ENCODE measurements at regions of chr17 and their contacts with region 1.

Region 1: GRCh38 chr17:41738077-41738735 is 3.8 kb upstream of the HAP1 start:
- DNase-seq: peak; percentile 69 to 95
- H3K4me3 ChIP-seq: no peak overlapping the region
- H3K27ac ChIP-seq: peak overlapping the region; percentile 79
- H3K4me1 ChIP-seq: peaks cover 0 to 11% (median 8%) of the 10 kb centered on the region in 4 experiments; a peak in 6 of 7 replicates
- H3K27me3 ChIP-seq: peaks cover 13 to 45% (median 33%) of the 10 kb centered on the region in 4 experiments
- CTCF ChIP-seq: peak; percentile 97 to 99 (median 98)
- EP300 ChIP-seq: 0 out of 3 replicates have a peak, but pooled peaks of 1 of the 2 experiments have one; percentile 34
- POLR2A ChIP-seq: 0 out of 3 replicates have a peak, but pooled peaks of 1 of the 2 experiments have one; percentile 19
- RAD21 ChIP-seq: peak; percentile 99 to 100

Region 2: GRCh38 chr17:41717408-41718286 is 20.6 kb before region 1 on chr17:
- CTCF ChIA-PET with region 1: interaction called, 7 read pairs
- POLR2A ChIA-PET with region 1: interaction called, 29 read pairs
- DNase-seq: no peak
- H3K4me3 ChIP-seq: no peak overlapping the region
- H3K27ac ChIP-seq: no peak overlapping the region
- H3K4me1 ChIP-seq: peaks cover 0 to 2% (median 0%) of the 10 kb centered on the region in 4 experiments; a peak in 2 of 7 replicates
- H3K27me3 ChIP-seq: peaks cover 0 to 8% (median 3%) of the 10 kb centered on the region in 4 experiments; a peak in 5 of 7 replicates
- CTCF ChIP-seq: no peak
- EP300 ChIP-seq: no peak
- POLR2A ChIP-seq: no peak
- RAD21 ChIP-seq: no peak

Region 3: GRCh38 chr17:41724476-41725050 is 13.6 kb before region 1 on chr17:
- CTCF ChIA-PET with region 1: interaction called, 10 read pairs
- POLR2A ChIA-PET with region 1: interaction called, 29 read pairs
- DNase-seq: no peak
- H3K4me3 ChIP-seq: no peak overlapping the region
- H3K27ac ChIP-seq: no peak overlapping the region
- H3K4me1 ChIP-seq: peaks cover 0 to 2% (median 0%) of the 10 kb centered on the region in 4 experiments; a peak in 3 of 7 replicates
- H3K27me3 ChIP-seq: no peaks in the 10 kb centered on the region
- CTCF ChIP-seq: no peak
- EP300 ChIP-seq: no peak
- POLR2A ChIP-seq: no peak
- RAD21 ChIP-seq: no peak

Region 4: DNA sequence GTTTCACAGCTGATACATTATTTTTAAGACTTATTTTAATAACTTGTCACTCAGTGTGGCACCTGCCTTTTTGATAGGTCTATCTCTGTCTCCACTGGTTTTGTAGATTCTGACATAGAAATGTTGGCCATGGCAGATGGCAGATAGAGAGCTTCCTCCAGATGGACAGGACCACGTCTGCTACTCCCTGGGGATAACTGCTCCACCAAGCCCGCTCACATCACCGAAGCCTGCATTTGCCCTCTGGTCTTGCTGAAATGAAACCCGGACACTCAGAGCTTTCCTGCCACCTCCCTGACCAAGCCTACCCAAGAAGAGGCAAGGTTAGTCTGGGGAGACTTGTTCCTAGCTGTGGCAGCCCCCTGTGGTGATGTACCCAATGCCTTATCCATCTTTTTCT is 12.7 kb after region 1 on chr17:
- CTCF ChIA-PET with region 1: interaction called, 4 read pairs
- POLR2A ChIA-PET with region 1: interaction called, 18 read pairs
- DNase-seq: no peak
- H3K4me3 ChIP-seq: no peak overlapping the region
- H3K27ac ChIP-seq: no peak overlapping the region
- H3K4me1 ChIP-seq: no peaks in the 10 kb centered on the region
- H3K27me3 ChIP-seq: no peaks in the 10 kb centered on the region; a peak in 2 of 7 replicates
- CTCF ChIP-seq: no peak
- EP300 ChIP-seq: no peak
- POLR2A ChIP-seq: no peak
- RAD21 ChIP-seq: no peak

Region 5: DNA sequence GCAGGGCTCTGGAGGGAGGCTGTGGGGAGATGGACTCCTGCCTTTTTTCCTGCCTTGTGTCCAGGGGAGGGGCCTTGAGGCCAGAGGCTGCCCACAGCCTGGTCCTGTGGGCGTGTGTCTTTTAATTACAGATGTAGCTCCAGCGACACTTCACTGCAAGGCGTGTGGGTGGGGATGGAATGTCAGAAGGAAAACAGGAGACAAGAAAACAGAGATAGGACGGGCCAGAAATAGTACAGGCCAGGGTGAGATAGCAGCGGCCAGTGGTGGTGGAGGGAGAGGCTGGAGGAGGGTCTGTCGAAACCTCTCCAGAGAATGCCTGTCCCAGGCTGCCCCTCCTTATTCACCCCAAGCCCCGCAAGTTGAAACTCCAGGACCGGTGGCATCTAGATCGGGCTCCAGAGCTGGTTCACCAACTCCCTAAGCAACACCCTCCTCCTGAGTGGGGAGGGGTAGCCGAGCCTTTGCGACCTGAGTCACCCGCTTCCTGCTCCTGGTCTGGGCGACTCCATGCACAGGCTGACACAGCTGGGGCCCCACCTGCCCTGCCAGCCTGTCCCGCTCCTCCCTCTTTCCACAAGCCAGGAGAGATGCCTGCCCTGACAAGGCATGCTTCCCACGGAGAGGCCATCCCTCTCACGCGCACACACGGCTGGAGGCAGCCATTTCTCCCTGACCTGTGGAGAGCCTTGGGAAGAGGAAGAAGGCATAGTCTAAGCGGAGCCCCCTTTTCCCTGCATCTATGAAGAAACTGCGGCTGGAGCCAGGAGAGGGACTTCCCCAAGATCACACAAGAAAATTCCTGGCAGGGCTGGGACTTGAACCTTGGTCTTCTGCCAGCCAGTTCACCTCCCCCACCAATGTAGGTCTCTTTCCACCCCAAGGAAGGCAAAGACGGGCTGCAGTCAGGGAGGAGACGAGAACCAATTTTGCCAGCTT is 54.9 kb after region 1 on chr17:
- CTCF ChIA-PET with region 1: interaction called, 8 read pairs
- POLR2A ChIA-PET with region 1: interaction called, 47 read pairs
- DNase-seq: no peak
- H3K4me3 ChIP-seq: peak overlapping the region in 3 of 4 experiments; percentile 15 to 47 (median 29); a peak in 5 of 8 replicates
- H3K27ac ChIP-seq: no peak overlapping the region; the same call in 1 of the 2 replicates
- H3K4me1 ChIP-seq: peaks cover 6 to 19% (median 15%) of the 10 kb centered on the region in 4 experiments
- H3K27me3 ChIP-seq: peaks cover 0 to 4% (median 2%) of the 10 kb centered on the region in 4 experiments; a peak in 4 of 7 replicates
- CTCF ChIP-seq: no peak
- EP300 ChIP-seq: no peak
- POLR2A ChIP-seq: no peak
- RAD21 ChIP-seq: no peak

Region 6: DNA sequence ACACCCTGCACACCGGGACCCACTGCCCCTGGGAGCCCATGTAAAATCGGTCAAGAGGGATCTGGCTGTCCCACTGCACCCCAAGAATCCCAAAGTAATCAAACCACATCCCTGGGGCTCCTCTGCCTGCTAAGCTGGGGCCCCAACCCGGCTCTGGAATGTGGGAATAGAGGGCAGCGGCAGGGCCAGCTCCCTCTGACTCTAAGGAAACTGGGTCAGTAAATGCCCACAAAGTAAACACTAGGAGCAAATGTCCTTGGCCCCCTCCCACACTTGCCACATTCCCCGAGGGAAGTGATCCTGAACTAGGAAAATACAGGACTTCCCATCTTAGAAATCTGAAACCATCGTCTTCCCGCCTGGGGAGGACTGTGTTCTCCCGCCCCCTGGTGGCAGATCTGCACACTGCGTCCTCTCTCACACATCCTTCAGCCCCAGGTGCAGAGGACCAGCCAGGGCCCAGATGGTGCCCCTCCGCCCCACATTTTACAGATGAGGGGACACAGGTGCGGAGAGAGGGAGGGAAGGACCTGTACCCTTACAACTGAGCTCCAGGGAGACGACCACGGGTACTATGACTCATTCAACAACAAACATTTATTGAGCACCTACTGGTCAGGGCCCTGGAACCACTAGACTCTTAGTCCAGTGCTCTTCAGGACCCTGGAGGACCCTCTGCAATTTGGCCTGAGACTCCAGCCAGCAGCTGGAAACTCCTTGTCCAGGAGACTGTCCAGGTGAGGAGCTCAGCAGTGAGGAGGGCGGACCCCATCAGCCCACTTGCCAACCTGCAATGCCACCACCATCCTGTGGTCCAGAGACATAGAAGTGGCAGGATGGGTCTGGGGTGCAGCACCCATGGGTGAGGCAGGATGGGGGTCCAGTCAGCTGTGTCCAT is 63.4 kb after region 1 on chr17:
- CTCF ChIA-PET with region 1: interaction called, 43 read pairs
- POLR2A ChIA-PET with region 1: interaction called, 47 read pairs
- DNase-seq: peak in 1 of 2 experiments; percentile 97
- H3K4me3 ChIP-seq: peak overlapping the region in 2 of 4 experiments; percentile 21 to 34; a peak in 4 of 8 replicates
- H3K27ac ChIP-seq: 0 out of 2 replicates have a peak overlapping the region, but pooled peaks have one; percentile 1
- H3K4me1 ChIP-seq: peaks cover 5 to 15% (median 10%) of the 10 kb centered on the region in 4 experiments
- H3K27me3 ChIP-seq: no peaks in the 10 kb centered on the region
- CTCF ChIP-seq: peak; percentile 92 to 97 (median 97)
- EP300 ChIP-seq: no peak
- POLR2A ChIP-seq: peak in 1 of 2 experiments; percentile 17; a peak in 1 of 3 replicates
- RAD21 ChIP-seq: peak; percentile 88 to 91

Measured in H1 (cell line).